AG04450 (cell line): ENCODE measurements at regions of chr10 and their contacts with region 1.

Region 1: DNA sequence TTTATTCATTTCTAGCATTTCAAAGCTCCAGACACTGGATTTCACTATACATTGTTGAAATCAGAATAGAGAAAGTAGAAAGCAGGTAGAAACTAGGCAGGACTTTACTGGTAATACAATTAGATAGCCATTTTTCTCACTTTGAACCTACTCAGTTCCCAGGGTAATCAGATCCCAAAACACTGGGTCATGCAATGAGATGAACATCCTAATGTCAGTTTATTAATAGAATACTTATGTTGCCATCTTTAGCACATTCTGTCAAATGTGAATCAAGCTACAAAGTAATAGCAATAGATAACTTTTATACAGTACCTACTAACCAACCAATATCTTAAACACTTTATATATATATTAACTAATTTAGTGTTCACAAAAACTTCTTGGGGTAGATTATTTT is 154.0 kb upstream of the KAT6B start:
- DNase-seq: no peak
- H3K4me3 ChIP-seq: no peak overlapping the region
- H3K27ac ChIP-seq: no peak overlapping the region
- H3K27me3 ChIP-seq: no peaks in the 10 kb centered on the region
- CTCF ChIP-seq: no peak

Region 2: GRCh38 chr10:74778436-74779094 is 106.1 kb after region 1 on chr10:
- CTCF ChIA-PET with region 1: no interaction called
- POLR2A ChIA-PET with region 1: no interaction called
- DNase-seq: no peak
- H3K4me3 ChIP-seq: no peak overlapping the region
- H3K27ac ChIP-seq: no peak overlapping the region
- H3K27me3 ChIP-seq: peaks cover 2% of the 10 kb centered on the region
- CTCF ChIP-seq: no peak

Region 3: DNA sequence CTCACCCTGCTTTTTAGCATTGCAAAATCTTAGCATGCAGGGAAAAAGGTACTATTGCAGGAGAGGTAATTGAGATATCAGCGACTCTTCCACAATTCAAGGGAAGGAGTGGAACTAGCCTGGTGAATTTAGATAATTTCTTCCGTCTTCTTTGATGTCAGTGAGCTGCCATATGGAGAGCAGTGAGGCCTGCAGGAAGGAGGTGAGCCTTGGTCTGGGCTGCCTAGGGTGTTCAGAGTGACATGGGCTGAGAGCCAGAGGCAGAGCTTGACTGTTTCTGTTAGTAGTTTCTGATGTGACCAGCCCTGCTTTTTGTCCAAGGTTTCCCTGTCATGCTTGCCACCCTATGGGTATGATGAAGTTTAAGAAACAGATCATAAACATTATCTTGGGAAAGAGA is 182.6 kb after region 1 on chr10:
- CTCF ChIA-PET with region 1: no interaction called
- POLR2A ChIA-PET with region 1: interaction called, 12 read pairs
- DNase-seq: no peak
- H3K4me3 ChIP-seq: no peak overlapping the region
- H3K27ac ChIP-seq: no peak overlapping the region
- H3K27me3 ChIP-seq: no peaks in the 10 kb centered on the region
- CTCF ChIP-seq: no peak